Right ventricle myocardium inferior (tissue), 1 donor: ENCODE measurements at regions of chr3 and their contacts with region 1.

Region 1: GRCh38 chr3:196942226-196942914 is at the start of gene NCBP2:
- DNase-seq: peak; percentile 100
- ATAC-seq: peak; percentile 97
- total RNA-seq, gene NCBP2: 29.8 TPM

Region 2: GRCh38 chr3:196639483-196640296 is 302.7 kb before region 1 on chr3 and contains the start of gene NRROS:
- intact Hi-C with region 1: no loop called
- DNase-seq: peak; percentile 89
- ATAC-seq: peak; percentile 88
- total RNA-seq, gene NRROS: 3.1 TPM

Region 3: DNA sequence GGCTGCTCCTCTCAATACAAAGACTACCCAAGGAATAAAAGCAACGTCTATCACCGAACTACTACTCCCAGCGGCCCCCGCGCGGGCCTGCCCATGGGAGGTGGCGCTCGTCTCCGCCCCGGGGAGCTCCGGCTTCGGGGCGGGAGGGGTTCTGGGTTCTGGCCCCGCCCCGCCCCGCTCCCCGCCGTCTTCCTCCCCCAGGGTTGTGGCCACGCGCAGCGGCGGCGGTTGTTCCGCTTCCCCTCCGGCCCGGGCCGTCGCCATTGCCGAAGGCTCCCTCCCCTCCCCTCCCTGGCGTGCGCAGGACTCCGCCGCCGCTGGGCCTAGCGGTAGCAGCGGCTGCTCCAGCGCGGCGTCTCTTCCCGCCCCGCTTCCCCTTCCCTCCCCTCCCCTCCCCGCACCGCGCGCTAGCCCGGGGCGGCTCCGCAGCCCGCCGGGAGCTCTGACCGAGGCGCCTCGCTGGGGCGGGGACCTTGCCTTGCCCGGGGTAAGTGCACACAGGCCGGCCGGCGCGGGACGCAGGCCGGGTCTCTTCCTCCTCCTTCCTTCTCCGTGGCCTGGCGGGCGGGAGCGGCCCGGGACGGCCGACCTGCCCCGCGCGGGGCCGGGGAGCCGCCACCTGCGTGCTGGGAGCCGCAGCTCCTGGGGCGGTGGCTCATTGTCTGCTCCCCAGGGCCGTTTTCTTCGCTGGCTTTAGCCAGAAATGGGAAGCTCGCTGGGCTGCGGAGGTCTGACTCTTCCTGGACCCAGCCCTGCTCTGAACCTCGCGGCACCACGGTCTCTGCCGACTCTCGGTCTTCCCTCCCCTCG is 202.5 kb before region 1 on chr3 and contains the start of gene PAK2:
- intact Hi-C with region 1: loop called (anchors 10 kb)
- DNase-seq: peak; percentile 98
- ATAC-seq: peak; percentile 98
- total RNA-seq, gene PAK2: 45.4 TPM

Region 4: DNA sequence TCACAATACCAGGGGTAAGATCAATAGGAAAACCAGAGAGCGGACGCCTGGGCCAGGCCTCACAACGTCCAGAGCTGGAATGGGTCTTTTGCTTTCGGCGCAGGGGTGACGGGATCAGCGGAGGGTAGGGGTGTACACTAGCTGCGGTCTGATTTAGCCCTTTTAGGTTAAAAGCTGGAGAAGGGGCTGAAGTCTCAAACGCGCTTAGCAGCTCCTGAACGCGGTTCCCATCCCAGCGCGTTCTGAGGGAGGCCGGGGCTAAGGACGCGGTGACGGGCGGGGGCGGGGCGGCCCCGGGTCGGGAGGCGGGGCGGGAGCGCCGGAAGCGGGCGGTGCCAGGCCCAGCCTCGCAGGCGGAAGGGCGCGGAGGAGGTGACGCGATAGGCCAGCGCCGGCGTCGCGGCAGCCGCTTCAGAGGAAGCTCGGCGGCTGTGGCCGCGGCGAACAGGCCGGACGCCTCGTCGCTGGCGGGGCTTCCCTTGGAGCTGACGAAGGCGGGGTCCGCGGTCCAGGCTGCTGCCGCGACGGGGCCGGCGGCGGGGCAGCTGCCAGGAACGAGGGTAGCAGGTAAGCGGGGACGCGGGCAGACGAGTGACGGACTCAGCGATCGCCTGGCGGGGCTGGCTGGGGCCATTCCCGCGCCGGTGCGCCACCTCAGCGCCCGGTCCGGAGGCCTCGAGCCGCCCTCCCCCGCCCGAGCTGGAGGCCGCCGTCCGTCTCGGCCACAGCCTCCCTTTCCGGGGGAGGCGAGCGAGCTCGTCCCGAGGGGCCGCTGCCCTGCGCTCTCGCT is 74.7 kb before region 1 on chr3 and contains the start of gene SENP5:
- intact Hi-C with region 1: loop called (anchors 2 kb)
- DNase-seq: peak; percentile 96
- ATAC-seq: peak; percentile 99
- total RNA-seq, gene SENP5: 15.8 TPM